ENCODE measurements at regions of chr3 and their contacts with region 1.

Region 1: DNA sequence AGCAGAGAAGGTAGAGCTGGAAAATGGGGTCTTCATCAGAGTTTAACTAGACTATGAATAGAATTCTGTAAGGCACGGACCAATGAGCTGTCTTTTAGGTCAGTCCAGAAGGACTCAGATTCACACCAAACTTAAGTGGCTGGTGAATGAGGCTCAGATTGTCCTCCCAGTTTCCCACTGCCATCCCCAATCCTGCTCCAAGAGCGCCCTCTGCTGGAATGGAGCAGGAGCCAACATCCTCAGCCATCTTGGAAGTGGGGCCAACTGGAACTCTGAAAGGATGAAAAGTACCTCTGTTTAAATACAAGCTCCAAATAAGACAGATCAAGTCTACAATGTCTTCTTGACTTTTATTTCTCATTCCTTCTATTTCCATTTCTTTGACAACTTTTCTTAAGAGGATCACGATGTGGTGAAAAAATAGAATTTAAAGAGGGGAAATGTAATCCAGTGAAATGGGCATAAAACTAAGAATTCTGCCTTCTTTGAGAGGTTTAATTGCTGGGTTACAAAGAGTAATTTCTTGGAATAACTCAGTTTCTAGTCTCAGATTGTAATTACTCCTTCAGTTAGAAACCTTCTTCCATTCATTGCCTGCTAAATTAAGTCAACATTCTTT is 217.1 kb upstream of the TPRG1 start:
- DNase-seq: peak; percentile 56 to 88
- H3K4me3 ChIP-seq: no peak overlapping the region
- H3K27ac ChIP-seq: no peak overlapping the region
- H3K4me1 ChIP-seq: no peaks in the 10 kb centered on the region
- H3K27me3 ChIP-seq: no peaks in the 10 kb centered on the region
- CTCF ChIP-seq: peak; percentile 83 to 98 (median 93)
- EP300 ChIP-seq: no peak
- POLR2A ChIP-seq: no peak
- RAD21 ChIP-seq: peak; percentile 100

Region 2: GRCh38 chr3:187745201-187746058 is 1209.3 kb before region 1 on chr3 and contains the start of gene BCL6:
- CTCF ChIA-PET with region 1: interaction called, 107 read pairs
- POLR2A ChIA-PET with region 1: interaction called, 15 read pairs
- DNase-seq: peak; percentile 83 to 89
- H3K4me3 ChIP-seq: peak within 1 kb of the TSS; percentile 79 to 91 (median 87)
- H3K27ac ChIP-seq: peak within 1 kb of the TSS; percentile 100
- H3K4me1 ChIP-seq: peaks cover 9 to 21% (median 11%) of the 10 kb centered on the region in 4 experiments; a peak in 6 of 7 replicates
- H3K27me3 ChIP-seq: peaks cover 0 to 10% (median 5%) of the 10 kb centered on the region in 4 experiments; a peak in 3 of 7 replicates
- CTCF ChIP-seq: no peak
- EP300 ChIP-seq: peak in 1 of 2 experiments; percentile 99; a peak in 2 of 3 replicates
- POLR2A ChIP-seq: peak; percentile 86 to 88
- RAD21 ChIP-seq: peak in 1 of 2 experiments; percentile 11; a peak in 1 of 4 replicates
- total RNA-seq, gene BCL6: 8.7 and 10.4 TPM in 2 replicates

Region 3: DNA sequence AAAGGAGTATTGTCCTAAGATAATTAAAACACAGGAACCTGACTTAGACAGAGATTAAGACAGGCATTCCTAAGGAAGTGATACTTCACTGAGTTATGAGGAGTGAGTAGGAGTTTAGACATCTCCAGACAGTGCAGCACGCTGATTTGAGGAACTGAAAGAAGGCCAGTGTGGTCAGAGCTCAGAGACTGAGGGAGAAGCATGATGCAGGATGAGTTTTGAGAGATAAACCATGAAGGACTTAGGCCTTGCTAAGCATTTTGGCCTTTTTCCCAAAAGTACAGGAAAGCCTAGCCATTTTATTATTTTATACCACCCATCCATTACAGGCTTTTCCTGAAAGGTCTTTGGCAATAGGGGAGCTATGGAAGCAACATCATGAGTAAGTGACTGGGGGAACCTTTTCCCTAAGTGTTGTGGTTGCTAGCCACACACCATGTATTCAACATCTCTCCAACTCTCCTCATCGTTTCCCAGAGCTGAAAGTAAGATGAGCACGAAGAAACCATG is 158.5 kb before region 1 on chr3:
- CTCF ChIA-PET with region 1: interaction called, 36 read pairs
- POLR2A ChIA-PET with region 1: no interaction called
- DNase-seq: no peak
- H3K4me3 ChIP-seq: no peak overlapping the region
- H3K27ac ChIP-seq: no peak overlapping the region
- H3K4me1 ChIP-seq: peaks cover 0 to 3% (median 1%) of the 10 kb centered on the region in 4 experiments; a peak in 2 of 7 replicates
- H3K27me3 ChIP-seq: no peaks in the 10 kb centered on the region
- CTCF ChIP-seq: no peak
- EP300 ChIP-seq: no peak
- POLR2A ChIP-seq: no peak
- RAD21 ChIP-seq: no peak

Region 4: GRCh38 chr3:188889054-188889491 is 65.6 kb before region 1 on chr3:
- CTCF ChIA-PET with region 1: interaction called, 10 read pairs
- POLR2A ChIA-PET with region 1: no interaction called
- DNase-seq: no peak
- H3K4me3 ChIP-seq: no peak overlapping the region
- H3K27ac ChIP-seq: no peak overlapping the region
- H3K4me1 ChIP-seq: no peaks in the 10 kb centered on the region
- H3K27me3 ChIP-seq: no peaks in the 10 kb centered on the region
- CTCF ChIP-seq: no peak
- EP300 ChIP-seq: no peak
- POLR2A ChIP-seq: no peak
- RAD21 ChIP-seq: no peak

Region 5: DNA sequence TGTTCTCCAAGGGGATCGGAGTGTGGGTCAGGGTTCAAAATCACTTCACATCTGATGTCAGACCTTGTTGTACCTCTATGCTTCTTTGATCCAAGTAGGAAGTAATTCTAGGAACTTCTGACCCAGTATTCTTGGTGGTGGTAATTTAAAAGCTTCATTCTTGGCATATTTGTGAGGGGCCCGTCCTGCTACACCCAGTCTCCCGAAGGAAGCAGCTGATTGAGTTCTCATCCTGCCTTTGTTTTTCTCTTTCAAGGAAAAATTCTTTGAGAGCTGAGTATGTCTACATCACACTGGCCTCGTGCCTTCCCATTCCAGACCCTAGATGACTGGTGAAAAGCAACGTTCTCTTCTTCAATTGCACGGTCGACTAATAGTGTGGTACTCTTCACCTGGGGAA is 17.3 kb before region 1 on chr3:
- CTCF ChIA-PET with region 1: interaction called, 71 read pairs
- POLR2A ChIA-PET with region 1: no interaction called
- DNase-seq: no peak
- H3K4me3 ChIP-seq: no peak overlapping the region; a peak in 1 of 8 replicates
- H3K27ac ChIP-seq: no peak overlapping the region
- H3K4me1 ChIP-seq: peaks cover 0 to 4% (median 0%) of the 10 kb centered on the region in 4 experiments; a peak in 3 of 7 replicates
- H3K27me3 ChIP-seq: no peaks in the 10 kb centered on the region
- CTCF ChIP-seq: no peak
- EP300 ChIP-seq: no peak
- POLR2A ChIP-seq: no peak
- RAD21 ChIP-seq: no peak

Region 6: GRCh38 chr3:189041482-189042090 is 86.9 kb after region 1 on chr3:
- CTCF ChIA-PET with region 1: interaction called, 29 read pairs
- POLR2A ChIA-PET with region 1: no interaction called
- DNase-seq: peak; percentile 33 to 69
- H3K4me3 ChIP-seq: no peak overlapping the region
- H3K27ac ChIP-seq: no peak overlapping the region
- H3K4me1 ChIP-seq: no peaks in the 10 kb centered on the region
- H3K27me3 ChIP-seq: no peaks in the 10 kb centered on the region
- CTCF ChIP-seq: peak; percentile 15 to 81 (median 62)
- EP300 ChIP-seq: no peak
- POLR2A ChIP-seq: no peak
- RAD21 ChIP-seq: peak; percentile 66 to 76

Region 7: GRCh38 chr3:189233225-189233858 is 278.6 kb after region 1 on chr3:
- CTCF ChIA-PET with region 1: interaction called, 16 read pairs
- POLR2A ChIA-PET with region 1: no interaction called
- DNase-seq: peak; percentile 31 to 52
- H3K4me3 ChIP-seq: no peak overlapping the region
- H3K27ac ChIP-seq: no peak overlapping the region
- H3K4me1 ChIP-seq: no peaks in the 10 kb centered on the region
- H3K27me3 ChIP-seq: no peaks in the 10 kb centered on the region
- CTCF ChIP-seq: peak; percentile 58 to 88 (median 73)
- EP300 ChIP-seq: no peak
- POLR2A ChIP-seq: no peak
- RAD21 ChIP-seq: peak; percentile 90

Measured in H1 (cell line).